Vagina (tissue), 2 donors: ENCODE measurements at regions of chr3 and their contacts with region 1.

Region 1: GRCh38 chr3:172332256-172333041 is 115.8 kb downstream of the GHSR start:
- DNase-seq: no peak
- H3K4me3 ChIP-seq: no peak overlapping the region
- H3K27ac ChIP-seq: peak overlapping the region; percentile 14
- H3K4me1 ChIP-seq: peaks cover 7% of the 10 kb centered on the region
- H3K27me3 ChIP-seq: no peaks in the 10 kb centered on the region
- CTCF ChIP-seq: peak; percentile 60 to 90 (median 85)
- POLR2A ChIP-seq: no peak

Region 2: DNA sequence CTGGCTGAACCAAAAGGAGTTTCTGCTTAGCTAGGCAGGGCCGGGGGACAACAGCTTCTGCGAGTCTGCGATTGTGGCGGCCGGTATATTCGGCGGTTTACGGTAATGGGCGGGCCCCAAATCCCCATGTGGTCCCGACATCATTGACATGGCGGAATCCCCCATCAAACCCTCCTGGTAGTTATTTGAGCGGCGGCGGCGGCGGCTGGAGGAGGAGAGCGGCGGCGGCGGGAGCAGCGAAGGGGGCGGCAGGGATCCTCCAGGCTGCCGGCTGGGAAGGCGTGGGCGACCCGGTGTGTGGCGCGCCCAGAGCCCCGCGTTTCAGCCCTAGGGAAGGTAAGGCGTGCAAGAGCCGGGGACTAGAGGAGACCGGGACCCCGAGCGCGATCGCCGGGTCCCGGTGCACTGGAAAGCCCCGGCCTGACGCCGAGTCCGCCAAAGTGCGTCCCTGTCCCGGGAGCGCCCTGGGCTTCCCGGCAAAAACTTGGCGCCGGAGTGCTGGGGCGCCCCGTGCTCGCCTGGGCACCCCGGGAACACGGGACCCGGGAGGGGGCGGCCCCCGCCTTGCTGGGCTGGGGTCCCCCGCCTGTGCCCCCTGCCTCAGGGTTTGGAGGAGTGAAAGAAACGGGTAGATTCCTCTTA is 292.9 kb before region 1 on chr3 and contains the start of gene FNDC3B:
- intact Hi-C with region 1: loop called (anchors 10 kb)
- DNase-seq: peak in 1 of 2 donors; percentile 95
- H3K4me3 ChIP-seq: peak within 1 kb of the TSS; percentile 89 to 98
- H3K27ac ChIP-seq: peak within 1 kb of the TSS; percentile 98
- H3K4me1 ChIP-seq: peaks cover 27% of the 10 kb centered on the region
- H3K27me3 ChIP-seq: no peaks in the 10 kb centered on the region
- CTCF ChIP-seq: no peak
- POLR2A ChIP-seq: peak in 1 of 2 donors; percentile 85
- total RNA-seq, gene FNDC3B: 68.5 TPM

Region 3: GRCh38 chr3:172201136-172201869 is 131.1 kb before region 1 on chr3:
- intact Hi-C with region 1: no loop called
- DNase-seq: no peak
- H3K4me3 ChIP-seq: no peak overlapping the region
- H3K27ac ChIP-seq: peak overlapping the region; percentile 49
- H3K4me1 ChIP-seq: peaks cover 52% of the 10 kb centered on the region
- H3K27me3 ChIP-seq: no peaks in the 10 kb centered on the region
- CTCF ChIP-seq: no peak
- POLR2A ChIP-seq: no peak